ENCODE measurements at regions of chr11 and their contacts with region 1.

Region 1: DNA sequence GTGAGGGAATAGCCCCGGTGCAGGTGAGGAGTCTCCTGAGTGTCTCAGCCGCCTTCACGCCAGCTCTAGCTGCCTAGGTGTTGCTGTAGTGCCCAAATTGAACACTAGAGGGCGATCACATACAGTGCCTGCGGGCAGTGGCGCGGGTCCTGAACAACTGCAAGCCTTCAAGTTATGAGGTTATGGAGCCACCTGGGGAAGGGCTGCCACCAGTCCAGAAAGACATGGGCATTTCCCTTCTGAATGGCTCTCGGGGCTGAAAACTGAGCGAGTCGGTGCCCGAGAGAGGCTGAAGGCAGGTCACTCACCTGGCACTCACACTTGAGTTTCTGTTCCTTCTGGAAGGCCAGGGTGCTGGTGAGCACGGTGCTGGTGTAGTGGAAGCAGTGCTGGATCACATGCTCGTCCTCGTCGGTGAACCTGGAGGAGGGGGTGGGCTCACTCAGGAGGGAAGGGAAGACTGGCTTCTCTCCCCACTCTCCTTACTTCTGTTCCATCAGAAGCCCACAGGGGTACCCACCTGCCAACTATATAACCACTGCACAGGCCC is 88.4 kb downstream of the PDE2A start:
- DNase-seq: peak in 2 of 3 donors; percentile 65 to 82
- ATAC-seq: peak; percentile 86
- H3K4me3 ChIP-seq: no peak overlapping the region
- H3K4me1 ChIP-seq: peaks cover 11% of the 10 kb centered on the region
- CTCF ChIP-seq: peak; percentile 94

Region 2: GRCh38 chr11:72222907-72223614 is 362.8 kb before region 1 on chr11:
- intact Hi-C with region 1: no loop called
- DNase-seq: peak; percentile 97 to 98 (median 97)
- ATAC-seq: peak; percentile 87
- H3K4me3 ChIP-seq: peak overlapping the region; percentile 77
- H3K4me1 ChIP-seq: peaks cover 15% of the 10 kb centered on the region
- CTCF ChIP-seq: peak; percentile 18

Region 3: DNA sequence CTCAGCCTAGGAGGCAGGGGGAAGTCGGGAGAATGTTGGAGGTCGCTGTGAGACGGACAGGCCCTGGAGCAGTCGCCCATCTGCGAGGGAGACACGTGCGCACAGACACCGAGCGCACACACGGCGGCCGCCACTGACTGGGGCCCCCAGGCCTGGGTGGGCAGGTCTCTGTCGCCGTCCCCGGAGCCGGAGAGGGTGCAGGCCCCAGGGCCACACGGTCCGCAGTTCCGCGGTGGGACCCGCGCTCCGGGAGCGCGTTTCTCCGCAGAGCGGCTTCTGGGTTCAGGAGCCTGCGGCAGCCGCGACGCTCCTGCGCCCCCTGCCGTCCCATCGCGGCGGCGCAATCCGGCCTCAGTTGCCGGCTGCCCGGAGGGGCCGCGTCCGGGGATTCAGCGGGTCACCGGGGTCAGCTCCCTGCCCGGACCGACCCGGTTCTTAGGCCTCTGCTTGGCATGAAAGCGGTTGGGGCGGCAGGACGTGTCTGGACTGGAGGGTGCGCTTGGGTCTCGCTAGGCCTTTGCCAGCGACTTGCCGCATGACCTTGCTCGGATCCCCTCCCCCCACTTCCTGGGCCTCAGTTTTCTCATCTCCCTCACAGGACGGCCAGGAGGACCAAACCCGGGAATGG is 57.2 kb after region 1 on chr11:
- intact Hi-C with region 1: loop called (anchors 5 kb)
- DNase-seq: peak; percentile 59 to 74 (median 61)
- ATAC-seq: peak; percentile 87
- H3K4me3 ChIP-seq: no peak overlapping the region
- H3K4me1 ChIP-seq: peaks cover 9% of the 10 kb centered on the region
- CTCF ChIP-seq: peak; percentile 96

Region 4: GRCh38 chr11:72648384-72649136 is 62.7 kb after region 1 on chr11:
- intact Hi-C with region 1: loop called (anchors 5 kb)
- DNase-seq: no peak
- ATAC-seq: no peak
- H3K4me3 ChIP-seq: no peak overlapping the region
- H3K4me1 ChIP-seq: no peaks in the 10 kb centered on the region
- CTCF ChIP-seq: no peak

Region 5: GRCh38 chr11:72683782-72684200 is 98.0 kb after region 1 on chr11:
- intact Hi-C with region 1: loop called in 1 of 2 experiments (anchors 10 kb)
- DNase-seq: peak in 2 of 3 donors; percentile 76 to 78
- ATAC-seq: peak; percentile 68
- H3K4me3 ChIP-seq: no peak overlapping the region
- H3K4me1 ChIP-seq: no peaks in the 10 kb centered on the region
- CTCF ChIP-seq: peak; percentile 91

Measured in mucosa of descending colon (tissue), 3 donors.